ENCODE measurements at regions of chr1 and their contacts with region 1.

Region 1: GRCh38 chr1:151545969-151546918 is 6.1 kb downstream of the TUFT1 start:
- DNase-seq: no peak
- ATAC-seq: no peak
- H3K4me3 ChIP-seq: no peak overlapping the region
- H3K27ac ChIP-seq: peak overlapping the region; percentile 41
- H3K4me1 ChIP-seq: peaks cover 26% of the 10 kb centered on the region
- H3K27me3 ChIP-seq: no peaks in the 10 kb centered on the region
- CTCF ChIP-seq: no peak

Region 2: GRCh38 chr1:151534665-151535278 is 11.5 kb before region 1 on chr1:
- intact Hi-C with region 1: loop called in 1 of 2 experiments (anchors 1 kb)
- DNase-seq: peak; percentile 80 to 88
- ATAC-seq: peak; percentile 67 to 76 (median 71)
- H3K4me3 ChIP-seq: no peak overlapping the region
- H3K27ac ChIP-seq: no peak overlapping the region
- H3K4me1 ChIP-seq: no peaks in the 10 kb centered on the region
- H3K27me3 ChIP-seq: no peaks in the 10 kb centered on the region
- CTCF ChIP-seq: peak; percentile 83

Measured in psoas muscle (tissue), 8 donors.